Right ventricle myocardium inferior (tissue), 1 donor: ENCODE measurements at regions of chr20 and their contacts with region 1.

Region 1: GRCh38 chr20:3077618-3078134 is 6.3 kb downstream of the OXT start:
- DNase-seq: no peak
- ATAC-seq: no peak

Region 2: GRCh38 chr20:3109350-3110302 is 31.9 kb after region 1 on chr20:
- intact Hi-C with region 1: loop called (anchors 5 kb)
- DNase-seq: no peak
- ATAC-seq: peak; percentile 20